IMR-90 (cell line): ENCODE measurements at regions of chr16 and their contacts with region 1.

Region 1: GRCh38 chr16:4957720-4958509 is at the start of gene SEC14L5:
- DNase-seq: peak; percentile 97
- ATAC-seq: peak; percentile 99
- H3K4me3 ChIP-seq: peak within 1 kb of the TSS; percentile 48
- H3K27ac ChIP-seq: no peak within 1 kb of the TSS
- H3K4me1 ChIP-seq: peaks cover 3% of the 10 kb centered on the region; the same call in 1 of the 2 replicates
- H3K27me3 ChIP-seq: peaks cover 5% of the 10 kb centered on the region
- CTCF ChIP-seq: no peak
- POLR2A ChIP-seq: no peak
- RAD21 ChIP-seq: no peak
- total RNA-seq, gene SEC14L5: not detected in 2 replicates

Region 2: DNA sequence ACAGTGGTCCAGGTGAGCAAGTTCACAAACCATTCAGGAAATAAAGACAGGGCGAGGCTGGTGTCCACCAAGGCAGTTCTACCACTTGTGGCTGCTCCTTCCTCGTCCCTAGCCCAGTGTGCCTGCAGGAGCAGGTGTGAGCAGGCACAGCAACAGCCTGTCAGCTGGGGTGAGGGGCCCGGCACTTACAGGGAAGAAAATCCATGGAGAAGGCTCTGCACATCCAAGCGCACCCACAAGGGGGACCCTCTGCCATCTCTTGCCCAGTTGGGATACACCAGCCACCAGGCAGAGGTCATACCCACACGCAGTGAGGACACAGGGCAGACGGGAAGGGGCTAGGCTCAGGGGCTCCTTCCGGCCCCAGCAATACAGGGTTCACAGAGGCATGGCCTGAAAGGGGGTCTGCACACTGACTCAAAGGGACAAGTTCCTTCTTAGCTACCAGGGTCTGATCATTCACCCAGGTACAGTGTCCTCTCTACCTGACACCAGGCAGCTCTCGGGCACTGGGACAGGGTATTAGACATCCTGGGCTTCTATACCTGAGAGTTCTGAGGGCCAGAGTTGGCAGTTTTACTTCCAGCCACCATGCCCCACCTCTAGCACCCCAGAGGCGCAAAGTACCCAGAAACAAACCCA is 446.4 kb before region 1 on chr16:
- CTCF ChIA-PET with region 1: no interaction called
- POLR2A ChIA-PET with region 1: no interaction called
- dilution Hi-C with region 1: no loop called
- in situ Hi-C with region 1: loop called (anchors 25 kb)
- intact Hi-C with region 1: loop called (anchors 10 kb)
- DNase-seq: peak; percentile 39
- ATAC-seq: peak; percentile 83
- H3K4me3 ChIP-seq: no peak overlapping the region
- H3K27ac ChIP-seq: no peak overlapping the region
- H3K4me1 ChIP-seq: no peaks in the 10 kb centered on the region
- H3K27me3 ChIP-seq: no peaks in the 10 kb centered on the region
- CTCF ChIP-seq: peak; percentile 51
- POLR2A ChIP-seq: no peak
- RAD21 ChIP-seq: peak; percentile 57

Region 3: DNA sequence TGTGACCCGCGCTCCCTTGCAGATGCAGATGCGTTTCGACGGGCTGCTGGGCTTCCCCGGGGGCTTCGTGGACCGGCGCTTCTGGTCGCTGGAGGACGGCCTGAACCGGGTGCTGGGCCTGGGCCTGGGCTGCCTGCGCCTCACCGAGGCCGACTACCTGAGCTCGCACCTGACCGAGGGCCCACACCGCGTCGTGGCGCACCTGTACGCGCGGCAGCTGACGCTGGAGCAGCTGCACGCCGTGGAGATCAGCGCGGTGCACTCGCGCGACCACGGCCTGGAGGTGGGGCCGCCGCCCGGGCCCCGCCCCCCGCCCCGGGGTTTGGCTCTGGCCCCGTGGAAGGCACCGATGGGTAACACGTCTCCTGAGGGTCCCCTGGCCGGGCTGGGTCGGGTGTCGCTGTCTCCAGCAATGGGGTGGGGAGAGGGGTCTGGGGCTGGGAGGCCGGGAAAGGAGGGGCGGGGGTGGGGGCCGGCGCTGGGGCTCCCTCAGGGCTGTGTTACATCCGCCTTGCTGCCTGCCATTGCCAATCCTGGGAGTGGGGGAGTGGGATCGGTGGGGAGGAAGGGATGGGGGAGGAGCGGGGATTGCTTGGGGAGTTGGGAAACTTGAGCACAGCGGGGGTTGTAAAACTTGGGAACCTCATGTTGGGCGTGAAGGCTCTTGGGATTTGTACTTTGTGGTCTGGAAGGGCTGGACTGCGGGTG is 263.8 kb before region 1 on chr16:
- CTCF ChIA-PET with region 1: no interaction called
- POLR2A ChIA-PET with region 1: no interaction called
- dilution Hi-C with region 1: no loop called
- in situ Hi-C with region 1: no loop called
- intact Hi-C with region 1: loop called (anchors 2 kb)
- DNase-seq: peak; percentile 38
- ATAC-seq: peak; percentile 55
- H3K4me3 ChIP-seq: peak overlapping the region; percentile 89
- H3K27ac ChIP-seq: peak overlapping the region; percentile 84
- H3K4me1 ChIP-seq: peaks cover 7% of the 10 kb centered on the region
- H3K27me3 ChIP-seq: no peaks in the 10 kb centered on the region
- CTCF ChIP-seq: no peak
- POLR2A ChIP-seq: no peak
- RAD21 ChIP-seq: no peak

Region 4: GRCh38 chr16:4766874-4767628 is 190.9 kb before region 1 on chr16 and contains the start of gene ZNF500:
- CTCF ChIA-PET with region 1: no interaction called
- POLR2A ChIA-PET with region 1: no interaction called
- dilution Hi-C with region 1: no loop called
- in situ Hi-C with region 1: loop called (anchors 10 kb)
- intact Hi-C with region 1: loop called (anchors 2 kb)
- DNase-seq: peak; percentile 95
- ATAC-seq: peak; percentile 92
- H3K4me3 ChIP-seq: peak within 1 kb of the TSS; percentile 88
- H3K27ac ChIP-seq: peak within 1 kb of the TSS; percentile 75
- H3K4me1 ChIP-seq: peaks cover 7% of the 10 kb centered on the region
- H3K27me3 ChIP-seq: no peaks in the 10 kb centered on the region
- CTCF ChIP-seq: no peak
- POLR2A ChIP-seq: peak; percentile 74
- RAD21 ChIP-seq: no peak
- total RNA-seq, gene ZNF500: 4.5 and 4.7 TPM in 2 replicates

Region 5: DNA sequence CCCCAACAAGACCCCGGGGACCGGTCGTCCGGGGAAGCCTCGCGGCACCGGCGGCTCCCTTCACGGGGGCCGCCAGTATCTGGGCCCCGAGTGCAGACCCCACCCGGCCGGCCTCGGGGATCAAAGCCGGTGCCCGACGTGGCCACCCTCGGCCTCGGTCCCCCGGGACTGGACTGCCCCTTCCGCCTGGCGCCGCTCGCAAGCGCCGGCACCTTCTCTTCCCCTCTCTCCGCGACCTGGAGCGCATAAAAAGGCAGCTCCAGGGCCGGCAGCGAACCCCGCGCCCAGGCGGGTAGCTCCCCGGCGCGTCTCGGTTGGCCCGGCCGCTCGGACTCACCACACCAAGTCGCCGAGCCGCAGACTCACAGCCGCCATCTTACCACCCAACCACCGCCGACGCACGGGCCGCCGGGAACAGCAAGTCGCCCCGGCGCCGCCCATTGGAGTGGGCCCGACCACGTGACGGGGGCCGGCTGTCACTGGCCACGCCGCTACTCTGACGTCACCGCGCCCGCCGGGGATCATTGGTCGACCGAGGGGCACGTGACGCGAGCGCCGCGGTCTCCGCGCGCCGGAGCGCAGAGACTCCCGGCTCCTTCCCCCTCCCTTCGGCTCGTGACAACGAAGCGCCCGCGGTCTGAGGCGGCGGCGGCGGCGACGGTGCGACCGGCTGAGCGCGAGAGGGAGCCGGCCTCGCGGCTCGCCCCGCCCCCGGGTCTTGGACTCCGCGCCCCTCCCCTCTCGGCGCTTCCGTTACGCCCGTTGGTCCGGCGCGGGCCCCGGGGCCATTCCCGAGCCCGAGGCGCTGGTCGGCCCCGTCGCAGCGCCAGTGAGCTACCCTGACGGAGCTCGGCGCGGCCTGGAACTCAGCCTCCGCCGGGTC is 110.8 kb before region 1 on chr16 and contains the starts of genes GLYR1 and UBN1:
- CTCF ChIA-PET with region 1: interaction called, 4 read pairs
- POLR2A ChIA-PET with region 1: no interaction called
- dilution Hi-C with region 1: no loop called
- in situ Hi-C with region 1: no loop called
- intact Hi-C with region 1: loop called (anchors 1 kb)
- DNase-seq: peak; percentile 95
- ATAC-seq: peak; percentile 92
- H3K4me3 ChIP-seq: peak within 1 kb of the TSS; percentile 88
- H3K27ac ChIP-seq: peak within 1 kb of the TSS; percentile 90
- H3K4me1 ChIP-seq: peaks cover 10% of the 10 kb centered on the region
- H3K27me3 ChIP-seq: no peaks in the 10 kb centered on the region
- CTCF ChIP-seq: no peak
- POLR2A ChIP-seq: peak; percentile 87
- RAD21 ChIP-seq: no peak
- total RNA-seq, gene GLYR1: 26.0 and 27.8 TPM in 2 replicates
- total RNA-seq, gene UBN1: 5.7 and 7.8 TPM in 2 replicates

Region 6: GRCh38 chr16:5033256-5034169 is 75.6 kb after region 1 on chr16 and contains the start of gene NAGPA:
- CTCF ChIA-PET with region 1: no interaction called
- POLR2A ChIA-PET with region 1: no interaction called
- dilution Hi-C with region 1: no loop called
- in situ Hi-C with region 1: no loop called
- intact Hi-C with region 1: no loop called
- DNase-seq: peak; percentile 81
- ATAC-seq: peak; percentile 90
- H3K4me3 ChIP-seq: peak within 1 kb of the TSS; percentile 86
- H3K27ac ChIP-seq: peak within 1 kb of the TSS; percentile 58
- H3K4me1 ChIP-seq: peaks cover 3% of the 10 kb centered on the region; the same call in 1 of the 2 replicates
- H3K27me3 ChIP-seq: no peaks in the 10 kb centered on the region
- CTCF ChIP-seq: no peak
- POLR2A ChIP-seq: no peak
- RAD21 ChIP-seq: no peak
- total RNA-seq, gene NAGPA: 5.3 and 6.5 TPM in 2 replicates